HEK293T (cell line): ENCODE measurements at regions of chr9 and their contacts with region 1.

Region 1: DNA sequence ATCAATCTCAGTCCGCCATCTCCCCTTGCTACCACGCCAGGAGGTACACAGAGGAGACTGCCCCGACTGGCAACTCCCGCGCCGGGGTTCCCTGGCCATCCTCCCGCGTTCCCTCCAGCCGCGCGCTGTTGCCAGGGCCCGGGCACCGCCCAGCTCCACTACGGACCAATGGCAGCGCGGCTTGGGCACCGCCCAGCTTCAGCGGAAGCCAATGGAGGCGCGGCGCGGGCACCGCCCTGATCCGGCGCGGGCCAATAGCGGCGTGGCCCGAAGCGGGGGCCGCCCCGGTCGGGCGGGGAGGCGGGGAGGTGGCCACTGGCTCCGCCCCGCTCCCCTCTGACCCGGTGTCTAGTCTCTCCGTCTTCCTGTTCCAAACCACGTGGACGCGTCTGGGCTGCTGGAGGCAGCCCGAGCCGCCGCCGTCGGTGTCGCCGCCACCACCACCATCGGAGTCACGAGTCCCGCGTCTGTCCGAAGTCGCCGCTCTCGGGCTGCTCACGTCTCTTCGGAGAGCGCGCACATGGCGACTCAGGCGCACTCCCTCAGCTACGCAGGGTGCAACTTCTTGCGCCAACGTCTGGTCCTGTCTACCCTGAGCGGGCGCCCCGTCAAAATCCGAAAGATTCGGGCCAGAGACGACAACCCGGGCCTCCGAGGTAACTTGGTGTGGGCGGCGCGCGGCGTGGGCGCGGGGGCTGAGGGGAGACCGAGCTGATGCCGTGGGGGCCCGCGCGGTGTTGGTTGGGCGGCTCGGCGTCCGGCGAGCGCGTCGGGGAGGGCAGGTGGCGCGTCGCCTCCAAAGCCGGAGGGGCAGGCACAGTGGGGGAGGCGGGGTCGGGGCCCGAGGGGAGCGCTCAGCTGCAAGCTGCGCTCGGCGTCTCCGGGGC is at the start of gene RCL1:
- DNase-seq: peak; percentile 89

Region 2: GRCh38 chr9:4760122-4760521 is 32.7 kb before region 1 on chr9:
- CTCF ChIA-PET with region 1: interaction called, 10 read pairs
- POLR2A ChIA-PET with region 1: no interaction called
- DNase-seq: no peak

Region 3: DNA sequence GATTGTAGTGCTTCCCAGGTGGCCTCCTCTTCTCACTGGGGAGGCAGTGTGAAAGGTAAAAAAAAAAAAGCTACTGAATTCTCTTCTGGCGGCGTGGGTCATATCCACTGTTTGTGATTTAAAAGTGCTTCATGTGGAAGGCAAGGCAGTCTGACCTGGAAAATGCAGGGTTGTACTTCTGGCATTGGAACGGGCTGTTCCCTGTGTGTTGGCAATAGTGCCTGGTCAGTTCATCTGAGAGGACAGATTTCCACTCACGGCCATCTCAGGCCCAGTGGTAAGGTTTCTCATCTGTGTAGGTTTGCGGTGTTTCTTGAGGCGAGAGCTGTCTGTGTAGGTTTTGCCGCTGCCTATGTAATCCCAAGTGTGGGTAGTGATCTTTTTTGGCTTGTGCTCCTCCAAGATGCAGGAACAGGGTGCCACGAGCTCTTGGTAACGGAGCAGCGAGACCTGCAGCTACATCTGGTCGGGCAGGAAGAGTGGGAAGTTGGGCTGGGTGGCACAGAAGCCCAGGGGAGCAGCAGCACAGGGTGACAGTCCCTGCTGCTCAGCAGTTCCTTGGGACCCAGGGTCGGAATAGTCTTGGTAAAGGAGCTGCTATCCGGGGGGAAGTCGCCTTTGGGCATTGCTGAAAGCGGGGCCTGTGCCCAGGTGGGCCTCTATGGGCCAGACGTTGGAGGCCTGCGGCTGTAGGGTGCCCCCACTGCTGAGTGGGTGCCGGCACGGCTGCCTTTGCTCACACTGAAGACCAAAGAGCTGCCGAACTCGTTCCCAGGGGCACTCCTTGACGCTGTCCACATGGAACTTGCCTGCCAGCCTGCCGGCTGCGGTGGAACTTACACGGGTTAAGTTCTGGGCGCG is 11.1 kb after region 1 on chr9:
- CTCF ChIA-PET with region 1: no interaction called
- POLR2A ChIA-PET with region 1: no interaction called
- DNase-seq: no peak

Region 4: GRCh38 chr9:4814913-4815312 is 22.1 kb after region 1 on chr9:
- CTCF ChIA-PET with region 1: no interaction called
- POLR2A ChIA-PET with region 1: no interaction called
- DNase-seq: no peak

Region 5: GRCh38 chr9:4939118-4939561 is 146.3 kb after region 1 on chr9:
- CTCF ChIA-PET with region 1: no interaction called
- POLR2A ChIA-PET with region 1: no interaction called
- DNase-seq: no peak